ENCODE measurements at regions of chr21 and their contacts with region 1.

Region 1: GRCh38 chr21:35840197-35840799 is 220.0 kb downstream of the SETD4 start:
- DNase-seq: peak; percentile 68
- ATAC-seq: no peak
- H3K4me3 ChIP-seq: no peak overlapping the region
- H3K4me3 Mint-ChIP-seq: no peak overlapping the region
- H3K27ac ChIP-seq: no peak overlapping the region
- H3K27ac Mint-ChIP-seq: no peak overlapping the region
- H3K4me1 ChIP-seq: no peaks in the 10 kb centered on the region
- H3K4me1 Mint-ChIP-seq: no peaks in the 10 kb centered on the region
- H3K27me3 ChIP-seq: no peaks in the 10 kb centered on the region
- H3K27me3 Mint-ChIP-seq: peaks cover 13% of the 10 kb centered on the region
- CTCF ChIP-seq: peak; percentile 86

Region 2: GRCh38 chr21:34693192-34693810 is 1147.0 kb before region 1 on chr21:
- CTCF ChIA-PET with region 1: interaction called, 169 read pairs
- POLR2A ChIA-PET with region 1: no interaction called
- intact Hi-C with region 1: loop called (anchors 1 kb)
- DNase-seq: peak; percentile 70
- ATAC-seq: peak; percentile 43
- H3K4me3 ChIP-seq: no peak overlapping the region
- H3K4me3 Mint-ChIP-seq: no peak overlapping the region
- H3K27ac ChIP-seq: no peak overlapping the region
- H3K27ac Mint-ChIP-seq: no peak overlapping the region
- H3K4me1 ChIP-seq: no peaks in the 10 kb centered on the region
- H3K4me1 Mint-ChIP-seq: no peaks in the 10 kb centered on the region
- H3K27me3 ChIP-seq: peaks cover 0 to 9% (median 1%) of the 10 kb centered on the region in 4 experiments
- H3K27me3 Mint-ChIP-seq: peaks cover 20% of the 10 kb centered on the region
- CTCF ChIP-seq: peak; percentile 96

Region 3: DNA sequence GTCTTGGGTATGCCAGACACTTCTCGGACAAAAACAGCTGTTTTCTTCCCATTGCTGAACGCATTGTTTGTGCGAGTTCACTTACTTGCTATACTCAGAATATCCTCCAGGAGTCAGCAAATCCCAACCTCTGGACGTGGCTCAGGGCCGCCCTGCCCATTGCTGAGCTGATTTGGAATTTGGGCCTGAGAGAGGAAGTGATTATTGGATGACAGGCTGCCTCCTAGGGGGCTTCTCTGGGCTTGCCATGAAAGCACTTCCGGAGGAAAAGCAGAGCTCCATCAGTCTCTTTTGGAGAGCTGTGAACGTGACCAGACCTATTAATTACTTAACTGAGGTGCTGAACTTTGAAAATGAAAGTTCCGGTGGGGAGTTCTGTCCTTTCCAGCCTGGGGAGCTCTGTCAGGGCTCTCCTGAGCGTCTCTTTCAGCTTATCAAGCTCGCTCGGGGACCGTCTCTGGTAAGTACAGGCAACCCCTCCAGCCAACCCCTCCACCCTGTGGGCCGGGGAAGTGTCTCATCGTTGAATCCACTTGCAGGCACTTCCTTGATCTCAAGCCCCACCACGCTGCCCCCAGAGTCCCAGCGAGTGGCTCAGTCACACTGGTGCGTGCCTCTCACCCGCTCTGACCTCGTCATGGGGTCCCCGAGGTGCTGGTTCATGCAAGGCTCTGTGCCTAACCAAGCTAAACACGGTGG is 1094.6 kb before region 1 on chr21:
- CTCF ChIA-PET with region 1: interaction called, 151 read pairs
- POLR2A ChIA-PET with region 1: no interaction called
- intact Hi-C with region 1: loop called (anchors 1 kb)
- DNase-seq: peak; percentile 76
- ATAC-seq: peak; percentile 89
- H3K4me3 ChIP-seq: peak overlapping the region in 3 of 5 experiments; percentile 14 to 41 (median 27)
- H3K4me3 Mint-ChIP-seq: peak overlapping the region; percentile 81
- H3K27ac ChIP-seq: no peak overlapping the region
- H3K27ac Mint-ChIP-seq: no peak overlapping the region
- H3K4me1 ChIP-seq: peaks cover 0 to 8% of the 10 kb centered on the region in 2 donors
- H3K4me1 Mint-ChIP-seq: peaks cover 4% of the 10 kb centered on the region
- H3K27me3 ChIP-seq: no peaks in the 10 kb centered on the region
- H3K27me3 Mint-ChIP-seq: peaks cover 25% of the 10 kb centered on the region
- CTCF ChIP-seq: peak; percentile 85

Region 4: DNA sequence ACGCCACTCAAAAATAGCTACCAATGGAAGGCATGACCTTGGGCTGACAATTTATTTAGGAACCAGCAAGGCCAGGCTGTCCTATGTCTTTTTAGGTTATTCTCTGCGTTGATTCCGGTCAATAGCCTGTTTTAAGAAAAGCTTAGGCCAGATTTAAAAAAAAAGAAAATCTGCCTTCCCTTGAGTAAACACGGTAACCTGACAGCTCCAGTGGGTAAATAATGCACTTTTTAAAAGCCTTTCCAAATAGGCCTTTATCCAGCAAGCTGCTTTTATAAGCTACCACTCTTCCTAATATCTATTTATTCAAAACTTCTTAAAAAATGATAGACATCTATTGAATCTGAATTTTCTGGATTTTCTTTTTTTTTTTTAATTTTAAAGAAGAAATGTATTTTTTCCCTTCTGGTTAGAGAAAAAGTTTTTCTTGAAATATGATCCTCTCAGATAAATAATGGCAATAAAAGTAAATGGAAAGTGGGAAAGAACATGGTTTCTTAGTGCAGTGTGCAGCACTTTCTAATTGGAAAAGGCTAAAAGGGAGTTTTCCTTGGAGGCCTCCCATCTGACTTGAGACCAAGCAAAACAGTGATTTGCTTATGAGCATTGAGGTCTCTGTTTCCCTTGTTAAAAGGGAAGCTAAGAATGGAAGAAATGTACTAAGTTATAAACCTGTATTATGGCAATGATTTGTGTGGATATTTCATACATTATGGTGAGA is 510.2 kb before region 1 on chr21:
- CTCF ChIA-PET with region 1: no interaction called
- POLR2A ChIA-PET with region 1: no interaction called
- intact Hi-C with region 1: no loop called
- DNase-seq: no peak
- ATAC-seq: no peak
- H3K4me3 ChIP-seq: no peak overlapping the region
- H3K4me3 Mint-ChIP-seq: no peak overlapping the region
- H3K27ac ChIP-seq: no peak overlapping the region
- H3K27ac Mint-ChIP-seq: no peak overlapping the region
- H3K4me1 ChIP-seq: no peaks in the 10 kb centered on the region
- H3K4me1 Mint-ChIP-seq: no peaks in the 10 kb centered on the region
- H3K27me3 ChIP-seq: no peaks in the 10 kb centered on the region
- H3K27me3 Mint-ChIP-seq: no peaks in the 10 kb centered on the region
- CTCF ChIP-seq: no peak

Region 5: GRCh38 chr21:35400233-35400957 is 439.9 kb before region 1 on chr21:
- CTCF ChIA-PET with region 1: interaction called, 3 read pairs
- POLR2A ChIA-PET with region 1: no interaction called
- intact Hi-C with region 1: loop called (anchors 1 kb)
- DNase-seq: peak; percentile 77
- ATAC-seq: peak; percentile 80
- H3K4me3 ChIP-seq: no peak overlapping the region
- H3K4me3 Mint-ChIP-seq: no peak overlapping the region
- H3K27ac ChIP-seq: no peak overlapping the region
- H3K27ac Mint-ChIP-seq: no peak overlapping the region
- H3K4me1 ChIP-seq: no peaks in the 10 kb centered on the region
- H3K4me1 Mint-ChIP-seq: peaks cover 2% of the 10 kb centered on the region
- H3K27me3 ChIP-seq: peaks cover 0 to 5% (median under 1%) of the 10 kb centered on the region in 4 experiments
- H3K27me3 Mint-ChIP-seq: peaks cover 4% of the 10 kb centered on the region
- CTCF ChIP-seq: peak; percentile 77

Region 6: DNA sequence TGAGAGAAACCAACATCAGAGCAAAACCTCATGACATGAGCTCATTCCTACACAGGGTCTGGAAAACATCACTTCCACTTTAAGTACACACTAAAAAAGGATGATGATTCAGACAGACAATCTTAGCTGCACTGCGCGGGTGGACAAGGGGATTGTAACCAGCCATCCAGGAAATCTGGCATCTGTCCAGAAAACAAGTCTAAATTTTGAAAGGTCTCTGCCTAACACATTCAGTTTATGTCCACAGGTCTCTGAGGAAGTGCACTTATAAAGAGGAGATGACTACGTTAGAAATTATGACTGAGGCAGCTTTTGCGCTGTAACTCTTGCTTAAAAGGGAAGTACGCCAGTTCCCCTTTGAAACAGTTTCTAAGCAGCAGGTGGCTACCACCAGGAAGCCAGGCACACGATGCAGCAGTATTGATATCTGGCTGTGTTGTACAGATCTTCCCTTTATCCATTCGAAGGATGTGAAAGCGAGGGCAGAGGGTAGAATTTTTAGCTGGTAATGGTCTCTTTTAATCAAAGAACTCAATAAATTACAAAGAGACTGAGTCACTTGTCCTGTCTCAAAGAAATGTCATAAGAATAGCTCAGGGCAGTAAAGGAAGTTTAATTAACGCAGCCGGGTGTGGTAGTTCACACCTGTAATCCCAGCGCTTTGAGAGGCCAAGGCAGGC is 92.1 kb after region 1 on chr21:
- CTCF ChIA-PET with region 1: interaction called, 10 read pairs
- POLR2A ChIA-PET with region 1: no interaction called
- intact Hi-C with region 1: no loop called
- DNase-seq: peak; percentile 85
- ATAC-seq: peak; percentile 91
- H3K4me3 ChIP-seq: no peak overlapping the region
- H3K4me3 Mint-ChIP-seq: no peak overlapping the region
- H3K27ac ChIP-seq: peak overlapping the region; percentile 24 to 49
- H3K27ac Mint-ChIP-seq: no peak overlapping the region
- H3K4me1 ChIP-seq: peaks cover 14 to 17% of the 10 kb centered on the region in 2 donors
- H3K4me1 Mint-ChIP-seq: no peaks in the 10 kb centered on the region
- H3K27me3 ChIP-seq: no peaks in the 10 kb centered on the region
- H3K27me3 Mint-ChIP-seq: peaks cover 1% of the 10 kb centered on the region
- CTCF ChIP-seq: no peak

Measured in B cell (primary cell).